ENCODE measurements at regions of chr22 and their contacts with region 1.

Region 1: GRCh38 chr22:20550821-20551744 is 43.7 kb downstream of the MED15 start:
- DNase-seq: peak; percentile 68
- H3K4me3 ChIP-seq: no peak overlapping the region
- H3K27ac ChIP-seq: peak overlapping the region; percentile 80
- H3K4me1 ChIP-seq: peaks cover 53% of the 10 kb centered on the region
- H3K27me3 ChIP-seq: no peaks in the 10 kb centered on the region
- CTCF ChIP-seq: no peak
- POLR2A ChIP-seq: no peak

Region 2: DNA sequence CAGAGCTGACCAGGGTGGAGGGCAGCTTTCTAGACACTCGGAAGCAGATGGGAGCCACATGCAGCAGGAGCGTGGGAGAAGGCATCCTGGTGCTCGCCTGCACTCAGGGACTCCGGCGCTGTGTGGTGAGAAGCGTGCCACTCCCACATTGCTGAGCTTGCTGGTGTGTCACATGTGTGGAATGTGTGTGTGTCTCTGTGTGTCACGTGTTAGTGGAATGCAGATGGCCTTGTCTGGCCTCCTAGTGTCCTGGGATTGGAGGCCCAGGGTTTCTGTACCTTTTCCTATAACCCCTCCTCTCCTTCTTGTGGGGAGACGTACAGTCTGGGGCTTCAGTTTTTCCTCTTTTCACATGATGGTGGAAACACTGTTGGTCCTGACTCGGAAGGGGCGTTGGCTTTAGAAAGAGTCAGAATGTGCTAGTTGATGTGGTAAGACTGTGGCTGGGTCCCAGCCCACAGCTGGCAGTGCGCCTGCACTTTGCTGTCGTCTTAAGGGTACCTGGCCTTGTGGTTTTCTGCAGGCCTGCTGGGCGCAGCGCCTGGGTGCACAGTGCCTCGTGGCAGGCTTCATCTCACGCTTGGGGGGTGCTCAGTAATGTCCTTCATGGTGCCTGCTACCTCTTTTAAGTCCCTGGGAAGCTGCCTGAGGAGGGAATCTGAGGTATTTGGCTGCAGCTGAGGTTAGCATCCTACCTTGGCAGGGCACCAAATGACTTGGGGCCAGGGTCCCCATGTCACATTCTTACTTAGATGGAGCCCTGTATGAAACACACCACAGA is 18.1 kb after region 1 on chr22:
- CTCF ChIA-PET with region 1: interaction called, 36 read pairs
- POLR2A ChIA-PET with region 1: no interaction called
- dilution Hi-C with region 1: no loop called
- intact Hi-C with region 1: no loop called
- DNase-seq: no peak
- H3K4me3 ChIP-seq: no peak overlapping the region
- H3K27ac ChIP-seq: no peak overlapping the region
- H3K4me1 ChIP-seq: no peaks in the 10 kb centered on the region
- H3K27me3 ChIP-seq: no peaks in the 10 kb centered on the region
- CTCF ChIP-seq: no peak
- POLR2A ChIP-seq: no peak

Region 3: GRCh38 chr22:21098099-21098671 is 547.1 kb after region 1 on chr22:
- CTCF ChIA-PET with region 1: no interaction called
- POLR2A ChIA-PET with region 1: no interaction called
- dilution Hi-C with region 1: no loop called
- intact Hi-C with region 1: no loop called
- DNase-seq: no peak
- H3K4me3 ChIP-seq: no peak overlapping the region
- H3K27ac ChIP-seq: no peak overlapping the region
- H3K4me1 ChIP-seq: no peaks in the 10 kb centered on the region
- H3K27me3 ChIP-seq: peaks cover 0 to 6% of the 10 kb centered on the region in 2 experiments
- CTCF ChIP-seq: no peak
- POLR2A ChIP-seq: no peak

Measured in endothelial cell of umbilical vein (primary cell).